Colonic mucosa (tissue), 4 donors: ENCODE measurements at regions of chr3 and their contacts with region 1.

Region 1: GRCh38 chr3:152471814-152472671 is 203.3 kb downstream of the MBNL1 start:
- DNase-seq: peak; percentile 82
- H3K4me3 ChIP-seq: peak overlapping the region; percentile 5
- H3K27ac ChIP-seq: no peak overlapping the region
- H3K4me1 ChIP-seq: no peaks in the 10 kb centered on the region
- H3K27me3 ChIP-seq: no peaks in the 10 kb centered on the region
- CTCF ChIP-seq: peak; percentile 74

Region 2: GRCh38 chr3:152524198-152525140 is 52.4 kb after region 1 on chr3:
- intact Hi-C with region 1: loop called (anchors 5 kb)
- DNase-seq: peak; percentile 42
- H3K4me3 ChIP-seq: no peak overlapping the region
- H3K27ac ChIP-seq: no peak overlapping the region
- H3K4me1 ChIP-seq: no peaks in the 10 kb centered on the region
- H3K27me3 ChIP-seq: no peaks in the 10 kb centered on the region
- CTCF ChIP-seq: peak; percentile 91

Region 3: GRCh38 chr3:152574461-152575079 is 102.5 kb after region 1 on chr3:
- intact Hi-C with region 1: loop called (anchors 10 kb)
- DNase-seq: peak; percentile 47
- H3K4me3 ChIP-seq: no peak overlapping the region
- H3K27ac ChIP-seq: no peak overlapping the region
- H3K4me1 ChIP-seq: no peaks in the 10 kb centered on the region
- H3K27me3 ChIP-seq: no peaks in the 10 kb centered on the region
- CTCF ChIP-seq: no peak

Region 4: GRCh38 chr3:152961323-152961722 is 489.3 kb after region 1 on chr3:
- intact Hi-C with region 1: loop called (anchors 10 kb)
- DNase-seq: peak; percentile 22
- H3K4me3 ChIP-seq: no peak overlapping the region
- H3K27ac ChIP-seq: no peak overlapping the region
- H3K4me1 ChIP-seq: no peaks in the 10 kb centered on the region
- H3K27me3 ChIP-seq: no peaks in the 10 kb centered on the region
- CTCF ChIP-seq: peak; percentile 35